Calu3 (cell line): ENCODE measurements at regions of chr18 and their contacts with region 1.

Region 1: DNA sequence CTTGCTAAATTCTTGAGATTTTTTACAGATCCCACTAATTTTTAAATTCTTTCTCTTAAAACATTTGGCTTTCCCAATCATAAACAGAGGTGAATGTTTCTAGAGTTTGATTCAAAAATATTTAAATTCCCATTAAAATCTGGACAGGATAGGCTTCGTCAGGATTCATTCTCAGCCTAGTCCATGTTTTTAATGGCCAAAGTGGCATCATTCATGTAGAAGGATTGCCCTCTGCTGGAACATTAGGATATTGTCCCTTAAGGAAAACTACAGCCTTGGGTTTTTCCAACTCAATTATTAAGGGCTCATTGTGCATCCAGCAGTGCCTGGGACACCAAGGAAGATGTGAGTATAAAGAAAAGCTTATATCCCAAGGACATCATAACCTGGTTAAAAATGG is 71.7 kb downstream of the TPGS2 start:
- DNase-seq: peak; percentile 38
- H3K4me3 Mint-ChIP-seq: no peak overlapping the region
- H3K27ac Mint-ChIP-seq: no peak overlapping the region
- H3K4me1 Mint-ChIP-seq: peaks cover 12% of the 10 kb centered on the region
- H3K27me3 Mint-ChIP-seq: no peaks in the 10 kb centered on the region
- CTCF ChIP-seq: peak; percentile 48

Region 2: GRCh38 chr18:35497027-35497369 is 1260.1 kb before region 1 on chr18:
- CTCF ChIA-PET with region 1: no interaction called
- intact Hi-C with region 1: no loop called
- DNase-seq: no peak
- H3K4me3 Mint-ChIP-seq: peak overlapping the region; percentile 83
- H3K27ac Mint-ChIP-seq: peak overlapping the region; percentile 98
- H3K4me1 Mint-ChIP-seq: peaks cover 32% of the 10 kb centered on the region
- H3K27me3 Mint-ChIP-seq: no peaks in the 10 kb centered on the region
- CTCF ChIP-seq: no peak

Region 3: DNA sequence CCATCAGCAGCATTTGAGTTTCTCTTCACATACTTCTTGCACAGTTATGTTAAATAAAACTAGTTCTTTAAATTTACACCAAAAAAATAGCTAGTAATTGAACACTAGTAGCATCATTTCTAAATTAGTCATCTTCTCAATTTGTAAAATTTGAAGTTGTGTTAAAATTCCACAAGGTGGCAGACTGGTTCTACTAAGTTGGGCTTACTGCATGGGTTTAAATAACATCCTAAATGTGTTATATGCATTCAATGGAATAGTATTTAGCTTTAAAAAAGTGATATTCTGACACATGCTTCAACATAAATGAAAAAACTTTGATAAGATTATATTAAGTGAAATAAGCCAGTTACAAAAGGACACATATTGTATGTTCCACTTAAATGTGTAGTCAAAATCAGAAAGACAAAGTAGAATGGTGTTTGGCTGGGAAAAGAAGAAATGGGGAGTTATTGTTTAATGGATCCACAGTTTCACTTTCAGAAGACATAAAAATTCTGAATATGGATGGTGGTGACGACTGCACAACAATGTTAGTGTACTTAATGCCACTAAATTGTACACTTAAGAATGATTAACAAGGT is 661.1 kb before region 1 on chr18:
- CTCF ChIA-PET with region 1: no interaction called
- intact Hi-C with region 1: loop called (anchors 1 kb)
- DNase-seq: peak; percentile 5
- H3K4me3 Mint-ChIP-seq: no peak overlapping the region
- H3K27ac Mint-ChIP-seq: no peak overlapping the region
- H3K4me1 Mint-ChIP-seq: no peaks in the 10 kb centered on the region
- H3K27me3 Mint-ChIP-seq: no peaks in the 10 kb centered on the region
- CTCF ChIP-seq: peak; percentile 29

Region 4: DNA sequence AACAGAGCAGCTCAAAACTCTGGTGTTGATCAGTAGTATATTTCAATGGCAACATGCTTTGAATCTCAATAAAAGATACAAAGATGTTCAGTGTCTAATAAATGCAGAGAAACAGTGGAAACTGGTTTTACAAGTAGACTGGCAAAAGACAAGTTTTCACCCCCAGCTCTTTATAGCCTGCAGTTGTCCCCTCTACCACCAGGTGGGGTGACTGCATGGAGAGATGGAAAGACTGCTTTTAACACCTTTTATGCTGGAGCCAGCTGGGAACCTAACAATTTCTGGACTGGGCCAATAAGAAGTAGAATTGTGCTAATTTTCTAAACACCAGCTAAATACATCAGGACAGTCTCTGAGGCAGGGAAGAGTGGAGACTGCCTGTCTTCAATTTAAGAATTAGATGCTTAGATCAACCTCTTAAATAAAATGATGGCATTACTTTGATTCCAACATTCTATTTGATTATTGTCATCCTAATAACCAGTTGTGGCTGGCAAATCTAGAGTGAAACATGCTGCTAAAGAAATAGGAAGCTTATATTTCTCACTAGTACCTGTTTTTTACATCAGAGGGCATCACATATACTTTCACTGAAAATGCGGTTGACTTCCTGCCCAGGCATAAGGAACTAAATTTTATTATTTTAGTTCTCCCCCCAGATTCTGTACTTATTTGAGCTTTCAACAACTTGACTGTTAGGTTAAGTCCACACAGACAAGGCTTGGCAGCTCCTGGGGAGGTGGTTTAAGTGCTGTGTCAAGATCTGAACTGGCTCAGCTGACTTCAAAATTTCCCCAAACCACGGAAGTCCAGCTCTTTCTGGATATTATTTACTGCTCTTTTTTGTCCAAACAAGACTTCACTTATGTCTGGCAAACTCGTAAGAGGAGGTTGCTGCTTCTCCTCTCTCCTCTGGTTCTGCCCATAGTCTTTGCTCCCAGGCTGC is 68.8 kb before region 1 on chr18:
- CTCF ChIA-PET with region 1: interaction called, 3 read pairs
- intact Hi-C with region 1: loop called (anchors 1 kb)
- DNase-seq: peak; percentile 83
- H3K4me3 Mint-ChIP-seq: no peak overlapping the region
- H3K27ac Mint-ChIP-seq: no peak overlapping the region
- H3K4me1 Mint-ChIP-seq: no peaks in the 10 kb centered on the region
- H3K27me3 Mint-ChIP-seq: peaks cover 34% of the 10 kb centered on the region
- CTCF ChIP-seq: peak; percentile 93